ENCODE measurements at regions of chr11 and their contacts with region 1.

Region 1: GRCh38 chr11:62860835-62861563 is 19.7 kb upstream of the SLC3A2 start:
- DNase-seq: peak in 1 of 5 donors; percentile 3
- H3K4me3 ChIP-seq: no peak overlapping the region
- H3K4me3 Mint-ChIP-seq: no peak overlapping the region
- H3K27ac ChIP-seq: peak overlapping the region; percentile 38
- H3K27ac Mint-ChIP-seq: peak overlapping the region in 2 of 8 donors; percentile 17 to 91
- H3K4me1 ChIP-seq: peaks cover 8% of the 10 kb centered on the region
- H3K4me1 Mint-ChIP-seq: peaks cover 9 to 17% (median 17%) of the 10 kb centered on the region in 3 donors
- H3K27me3 ChIP-seq: no peaks in the 10 kb centered on the region
- H3K27me3 Mint-ChIP-seq: peaks cover 0 to under 1% of the 10 kb centered on the region in 2 donors

Region 2: GRCh38 chr11:62694455-62695167 is 166.4 kb before region 1 on chr11:
- CTCF ChIA-PET with region 1: no interaction called
- POLR2A ChIA-PET with region 1: no interaction called
- DNase-seq: peak; percentile 68 to 84 (median 72)
- H3K4me3 ChIP-seq: no peak overlapping the region
- H3K4me3 Mint-ChIP-seq: no peak overlapping the region
- H3K27ac ChIP-seq: no peak overlapping the region
- H3K27ac Mint-ChIP-seq: peak overlapping the region in 5 of 8 donors; percentile 5 to 81 (median 48)
- H3K4me1 ChIP-seq: peaks cover 7% of the 10 kb centered on the region
- H3K4me1 Mint-ChIP-seq: peaks cover 5 to 8% (median 6%) of the 10 kb centered on the region in 3 donors
- H3K27me3 ChIP-seq: no peaks in the 10 kb centered on the region
- H3K27me3 Mint-ChIP-seq: peaks cover 0 to 2% of the 10 kb centered on the region in 2 donors

Region 3: GRCh38 chr11:62875698-62876478 is 14.9 kb after region 1 on chr11:
- CTCF ChIA-PET with region 1: interaction called, 32 read pairs
- POLR2A ChIA-PET with region 1: interaction called, 54 read pairs
- DNase-seq: no peak
- H3K4me3 ChIP-seq: no peak overlapping the region
- H3K4me3 Mint-ChIP-seq: no peak overlapping the region
- H3K27ac ChIP-seq: no peak overlapping the region
- H3K27ac Mint-ChIP-seq: no peak overlapping the region
- H3K4me1 ChIP-seq: peaks cover 10% of the 10 kb centered on the region
- H3K4me1 Mint-ChIP-seq: peaks cover 12 to 16% (median 14%) of the 10 kb centered on the region in 3 donors
- H3K27me3 ChIP-seq: no peaks in the 10 kb centered on the region
- H3K27me3 Mint-ChIP-seq: no peaks in the 10 kb centered on the region